Activated CD4-positive, alpha-beta T cell treated with anti-CD3 and anti-CD28 coated beads, Interleukin-2, amount 10 ng/mL, durations not matched to agents 7 days and 5 days (primary cell): ENCODE measurements at regions of chr10 and their contacts with region 1.

Region 1: GRCh38 chr10:101889256-101890210 is 45.9 kb upstream of the KCNIP2 start:
- DNase-seq: peak; percentile 82
- H3K4me3 Mint-ChIP-seq: no peak overlapping the region
- H3K27ac Mint-ChIP-seq: peak overlapping the region; percentile 70
- H3K4me1 Mint-ChIP-seq: peaks cover 6% of the 10 kb centered on the region
- H3K27me3 Mint-ChIP-seq: no peaks in the 10 kb centered on the region

Region 2: DNA sequence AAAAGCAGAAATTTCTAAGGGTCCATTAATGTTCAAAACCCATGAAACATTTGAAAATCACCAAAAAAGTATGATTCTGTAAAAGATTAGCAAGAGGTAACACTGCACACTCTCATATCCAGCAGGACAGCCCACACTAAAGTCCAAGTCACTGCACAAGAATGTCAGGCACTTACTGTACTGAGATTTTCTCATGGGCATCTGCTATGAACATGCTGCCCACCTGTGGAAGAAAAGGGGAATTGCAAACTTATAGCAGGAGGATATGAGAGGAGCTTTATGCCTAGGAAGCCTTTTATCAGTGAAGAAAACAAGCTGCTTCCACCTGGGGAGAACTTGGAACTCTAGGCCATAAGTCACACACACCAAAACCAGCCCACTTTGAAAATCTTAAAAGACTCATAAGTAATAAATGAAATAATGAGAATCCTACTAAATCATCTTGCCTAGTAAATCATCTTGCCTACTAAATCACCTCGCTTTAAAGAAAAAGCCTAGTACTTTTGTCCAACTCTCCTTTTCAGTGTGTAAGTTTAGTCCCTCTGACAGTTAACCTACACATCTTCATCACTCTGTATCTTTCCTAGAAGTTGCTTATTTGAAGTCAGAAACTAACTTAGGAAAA is 120.4 kb after region 1 on chr10:
- CTCF ChIA-PET with region 1: interaction called, 21 read pairs
- POLR2A ChIA-PET with region 1: no interaction called
- DNase-seq: peak; percentile 62
- H3K4me3 Mint-ChIP-seq: no peak overlapping the region
- H3K27ac Mint-ChIP-seq: no peak overlapping the region
- H3K4me1 Mint-ChIP-seq: no peaks in the 10 kb centered on the region
- H3K27me3 Mint-ChIP-seq: no peaks in the 10 kb centered on the region

Region 3: GRCh38 chr10:102461187-102462054 is 571.9 kb after region 1 on chr10:
- CTCF ChIA-PET with region 1: no interaction called
- POLR2A ChIA-PET with region 1: no interaction called
- DNase-seq: peak; percentile 92
- H3K4me3 Mint-ChIP-seq: peak overlapping the region; percentile 85
- H3K27ac Mint-ChIP-seq: peak overlapping the region; percentile 85
- H3K4me1 Mint-ChIP-seq: peaks cover 31% of the 10 kb centered on the region
- H3K27me3 Mint-ChIP-seq: no peaks in the 10 kb centered on the region